ENCODE measurements at regions of chr9 and their contacts with region 1.

Region 1: DNA sequence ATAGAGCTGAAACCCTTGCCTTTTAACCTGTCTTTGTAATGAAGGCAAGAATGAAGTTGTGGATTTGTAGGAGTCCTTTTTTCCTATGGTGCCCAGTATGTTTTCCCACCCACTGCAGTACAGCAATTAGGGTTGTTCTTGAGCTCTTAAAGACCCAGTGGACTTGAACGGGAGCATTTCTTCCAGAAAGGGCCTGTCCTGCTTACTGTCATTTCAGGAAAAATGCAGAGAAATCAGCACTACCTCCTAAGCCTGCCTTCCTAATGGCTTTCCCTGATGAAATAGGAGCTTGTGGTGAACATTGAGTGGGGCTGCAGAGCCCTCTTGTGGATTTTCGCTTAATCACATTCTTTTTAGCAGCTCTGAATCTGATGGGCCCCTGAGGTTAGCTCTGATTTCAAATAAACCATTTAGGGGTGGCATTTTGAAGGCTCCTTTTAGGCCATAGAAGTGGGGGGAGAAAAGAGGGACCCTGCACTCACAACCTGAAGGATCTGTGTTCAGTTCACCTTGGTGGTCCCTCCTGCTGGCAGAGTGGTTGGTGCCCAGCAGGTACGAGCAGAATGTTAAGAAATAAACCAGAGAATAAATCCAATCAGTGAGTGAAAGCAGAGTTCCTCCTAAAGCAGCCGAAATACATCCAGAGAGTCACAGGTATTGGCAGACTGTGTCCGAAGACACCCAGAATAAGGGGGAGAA is 188.0 kb upstream of the KLF9 start:
- DNase-seq: peak; percentile 52
- ATAC-seq: peak; percentile 88
- H3K4me3 Mint-ChIP-seq: no peak overlapping the region
- H3K27ac Mint-ChIP-seq: no peak overlapping the region
- H3K4me1 Mint-ChIP-seq: peaks cover 30% of the 10 kb centered on the region
- H3K27me3 Mint-ChIP-seq: no peaks in the 10 kb centered on the region
- CTCF ChIP-seq: peak; percentile 56

Region 2: GRCh38 chr9:70413798-70414775 is 188.4 kb before region 1 on chr9 and contains the start of gene KLF9:
- CTCF ChIA-PET with region 1: interaction called, 15 read pairs
- POLR2A ChIA-PET with region 1: interaction called, 5 read pairs
- DNase-seq: peak; percentile 78
- ATAC-seq: peak; percentile 64
- H3K4me3 Mint-ChIP-seq: peak within 1 kb of the TSS; percentile 83
- H3K27ac Mint-ChIP-seq: peak within 1 kb of the TSS; percentile 79
- H3K4me1 Mint-ChIP-seq: peaks cover 34% of the 10 kb centered on the region
- H3K27me3 Mint-ChIP-seq: peaks cover 59% of the 10 kb centered on the region
- CTCF ChIP-seq: no peak
- total RNA-seq, gene KLF9: 0.78 to 1.0 TPM (median 0.82 TPM) in 3 replicates

Region 3: GRCh38 chr9:70484210-70485130 is 118.0 kb before region 1 on chr9:
- CTCF ChIA-PET with region 1: interaction called, 24 read pairs
- POLR2A ChIA-PET with region 1: no interaction called
- DNase-seq: peak; percentile 26
- ATAC-seq: peak; percentile 89
- H3K4me3 Mint-ChIP-seq: no peak overlapping the region
- H3K27ac Mint-ChIP-seq: no peak overlapping the region
- H3K4me1 Mint-ChIP-seq: peaks cover 15% of the 10 kb centered on the region
- H3K27me3 Mint-ChIP-seq: no peaks in the 10 kb centered on the region
- CTCF ChIP-seq: peak; percentile 62

Region 4: DNA sequence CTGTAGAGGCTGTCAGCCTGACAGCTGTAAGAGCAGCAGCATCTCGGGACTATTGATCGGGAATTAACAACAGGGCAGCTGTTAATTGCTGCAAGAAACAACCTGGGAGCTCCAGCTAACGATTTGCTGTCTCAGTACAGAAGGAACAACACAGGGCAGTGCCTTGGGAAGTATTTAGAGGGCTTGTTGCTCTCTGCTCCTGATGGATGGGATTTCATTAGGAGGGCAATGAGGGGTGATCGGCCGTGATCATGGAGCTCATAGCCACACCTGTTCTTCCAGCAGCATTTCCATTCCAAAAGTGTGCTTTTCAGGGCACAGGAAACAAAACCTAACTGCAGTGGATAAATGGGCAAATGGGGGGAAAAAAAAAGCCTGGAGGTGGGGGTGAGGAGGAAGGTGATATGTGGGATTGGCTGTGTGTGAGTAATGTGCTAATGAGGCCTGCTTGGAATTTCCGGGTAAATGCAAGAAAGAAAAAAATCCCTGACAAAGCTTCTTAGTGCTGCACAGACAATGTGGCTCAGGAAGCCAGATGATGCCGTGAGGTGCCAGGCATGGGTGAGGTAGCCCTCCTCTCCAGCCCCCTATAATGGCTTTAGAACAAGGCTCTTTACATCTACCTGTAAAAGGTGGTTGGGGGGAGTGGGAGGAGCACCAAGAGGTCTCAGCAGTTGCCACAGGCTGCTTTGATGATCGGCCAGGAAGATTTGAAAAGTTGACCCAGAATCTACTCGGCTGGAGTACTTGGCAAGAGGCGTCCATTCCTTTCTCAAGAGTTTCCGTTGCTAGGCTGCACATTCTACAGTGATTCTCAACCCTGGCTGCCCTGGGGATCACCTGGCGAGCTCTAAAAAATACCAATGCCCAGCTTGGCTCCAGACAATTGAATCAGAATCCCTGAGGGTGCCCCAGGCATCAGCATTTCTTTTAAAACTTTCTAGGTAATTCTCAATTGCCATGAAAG is 48.5 kb before region 1 on chr9:
- CTCF ChIA-PET with region 1: interaction called, 15 read pairs
- POLR2A ChIA-PET with region 1: interaction called, 4 read pairs
- DNase-seq: peak; percentile 18
- ATAC-seq: peak; percentile 91
- H3K4me3 Mint-ChIP-seq: peak overlapping the region; percentile 16
- H3K27ac Mint-ChIP-seq: peak overlapping the region; percentile 97
- H3K4me1 Mint-ChIP-seq: peaks cover 38% of the 10 kb centered on the region
- H3K27me3 Mint-ChIP-seq: no peaks in the 10 kb centered on the region
- CTCF ChIP-seq: no peak

Measured in WTC11 (cell line).